Activated T-helper 1 cell treated with anti-CD3 and anti-CD28 coated beads, Interleukin-12 subunit alpha, Interleukin-12 subunit beta, Interleukin-2, Interleukin-4 antibody, amounts not matched to agents 30 ng/mL and 10 ng/mL and 1 ng/mL, durations not matched to agents 14 hours and 24 hours and 36 hours (primary cell): ENCODE measurements at regions of chr15 and their contacts with region 1.

Region 1: GRCh38 chr15:58590926-58591325 is 158.6 kb downstream of the ADAM10 start:
- DNase-seq: no peak
- H3K4me3 Mint-ChIP-seq: no peak overlapping the region
- H3K27ac Mint-ChIP-seq: no peak overlapping the region
- H3K4me1 Mint-ChIP-seq: peaks cover 35% of the 10 kb centered on the region
- H3K27me3 Mint-ChIP-seq: no peaks in the 10 kb centered on the region

Region 2: DNA sequence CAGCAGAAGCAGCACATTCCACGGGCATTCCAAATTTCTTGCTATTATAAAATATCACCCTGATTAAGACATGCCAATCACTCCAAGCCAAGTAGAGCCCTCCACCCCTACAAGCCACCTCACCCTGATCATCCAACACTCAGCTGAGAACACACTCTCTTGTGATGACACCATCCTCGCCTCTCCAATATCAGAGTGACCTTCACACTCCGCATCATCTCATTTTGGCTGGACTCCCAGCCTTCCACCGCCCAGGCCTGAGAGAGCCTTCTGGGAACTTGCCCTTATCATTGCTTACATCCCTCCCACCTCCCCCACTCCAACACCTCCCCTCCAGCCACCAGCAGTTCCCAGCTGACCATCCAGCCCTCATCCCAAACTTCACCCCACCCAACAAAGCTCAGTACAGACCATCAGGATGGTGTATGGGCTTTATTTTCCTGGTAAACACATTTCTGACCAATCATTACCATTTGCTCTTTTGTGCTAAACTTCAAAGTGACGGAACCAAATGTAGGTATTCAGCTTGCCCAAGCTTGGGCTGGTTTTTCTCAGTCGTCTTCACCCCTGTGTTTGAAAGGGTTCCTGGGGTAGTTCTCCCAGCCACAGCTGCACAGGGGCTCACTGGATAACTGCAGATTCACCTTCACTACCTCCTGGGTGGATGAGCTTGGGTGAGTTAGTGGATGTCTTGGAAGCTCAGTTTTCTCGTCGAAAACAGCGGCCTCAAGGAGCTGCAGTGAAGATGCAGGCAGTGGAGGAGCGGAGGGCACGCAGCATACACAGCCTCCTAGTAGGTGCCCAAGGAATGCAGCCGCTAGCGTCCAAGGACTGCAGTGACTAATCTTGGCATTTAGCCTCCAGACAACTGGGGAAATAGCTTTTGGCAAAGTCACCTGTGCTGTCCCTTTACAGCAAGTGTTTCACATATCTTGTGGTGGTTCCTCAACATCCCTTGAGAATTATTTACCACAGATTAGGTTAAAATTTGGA is 44.0 kb before region 1 on chr15:
- intact Hi-C with region 1: loop called (anchors 5 kb)
- DNase-seq: no peak
- H3K4me3 Mint-ChIP-seq: no peak overlapping the region
- H3K27ac Mint-ChIP-seq: peak overlapping the region; percentile 97
- H3K4me1 Mint-ChIP-seq: peaks cover 63% of the 10 kb centered on the region
- H3K27me3 Mint-ChIP-seq: no peaks in the 10 kb centered on the region

Region 3: DNA sequence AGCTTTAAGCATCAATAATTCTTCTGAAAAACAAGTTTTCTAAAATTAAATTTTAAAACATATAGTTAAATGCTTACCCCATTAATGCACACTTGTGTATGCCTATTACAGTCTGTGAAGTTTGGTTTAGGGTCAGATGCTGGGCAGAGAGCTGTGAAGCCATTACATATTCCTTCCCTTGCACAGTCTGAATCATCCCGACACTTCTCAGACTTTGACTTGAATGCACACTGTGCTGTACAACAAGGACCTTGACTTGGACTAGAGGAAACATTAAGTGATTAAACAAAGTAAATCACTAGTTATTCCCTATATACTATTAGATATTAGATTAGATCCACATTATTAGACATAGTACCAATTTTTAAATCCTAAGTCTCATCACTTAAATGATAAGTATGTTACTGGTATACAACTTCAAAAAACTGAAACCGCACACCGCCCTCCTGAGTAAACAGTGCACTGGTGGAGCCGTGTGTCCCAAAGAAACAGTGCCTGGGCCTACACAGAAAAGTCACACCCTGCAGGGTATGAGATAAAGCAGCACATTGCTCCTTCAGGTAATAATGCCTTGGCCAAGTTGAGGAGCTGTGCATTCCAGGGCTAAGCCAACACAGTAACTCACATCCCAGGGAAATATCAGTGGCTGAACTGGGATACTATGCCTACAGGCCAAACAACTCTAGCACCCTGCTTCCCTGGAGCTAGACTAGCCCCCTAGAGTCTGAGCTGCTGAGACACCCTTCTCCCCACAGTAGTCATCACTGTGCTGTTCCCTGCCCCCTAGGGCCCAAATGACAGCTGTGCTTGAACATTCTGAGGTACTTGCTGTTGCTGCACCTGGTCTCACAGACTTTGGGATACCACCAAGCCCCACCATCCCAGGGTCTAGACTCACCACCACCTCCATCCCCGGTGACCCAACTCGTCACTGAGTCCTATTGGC is 21.1 kb after region 1 on chr15:
- intact Hi-C with region 1: no loop called
- DNase-seq: no peak
- H3K4me3 Mint-ChIP-seq: no peak overlapping the region
- H3K27ac Mint-ChIP-seq: no peak overlapping the region
- H3K4me1 Mint-ChIP-seq: peaks cover 51% of the 10 kb centered on the region
- H3K27me3 Mint-ChIP-seq: no peaks in the 10 kb centered on the region

Region 4: GRCh38 chr15:58677426-58677825 is 86.5 kb after region 1 on chr15:
- intact Hi-C with region 1: no loop called
- DNase-seq: no peak
- H3K4me3 Mint-ChIP-seq: no peak overlapping the region
- H3K27ac Mint-ChIP-seq: no peak overlapping the region
- H3K4me1 Mint-ChIP-seq: peaks cover 26% of the 10 kb centered on the region
- H3K27me3 Mint-ChIP-seq: no peaks in the 10 kb centered on the region

Region 5: DNA sequence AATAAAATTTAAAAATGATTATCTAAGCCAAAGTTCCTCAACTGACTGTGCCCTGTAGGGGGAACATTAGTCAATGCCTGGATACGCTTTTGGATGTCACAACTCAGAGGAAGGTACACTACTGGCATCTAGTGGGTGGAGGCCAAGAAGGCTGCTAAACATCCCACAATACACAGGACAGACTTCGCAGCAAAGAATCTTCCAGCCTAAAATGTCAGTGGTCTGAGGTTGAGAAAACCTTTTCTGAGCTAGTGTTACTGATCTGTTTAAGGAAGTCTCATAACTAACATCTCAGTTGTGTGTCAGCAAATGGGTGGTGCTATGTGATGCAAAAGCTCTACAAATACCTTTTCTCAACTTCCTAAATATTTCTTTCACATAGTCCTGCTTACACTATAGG is 594.8 kb after region 1 on chr15:
- intact Hi-C with region 1: no loop called
- DNase-seq: no peak
- H3K4me3 Mint-ChIP-seq: no peak overlapping the region
- H3K27ac Mint-ChIP-seq: no peak overlapping the region
- H3K4me1 Mint-ChIP-seq: no peaks in the 10 kb centered on the region
- H3K27me3 Mint-ChIP-seq: peaks cover 1% of the 10 kb centered on the region